MCF 10A (cell line): ENCODE measurements at regions of chr10 and their contacts with region 1.

Region 1: GRCh38 chr10:11270135-11270857 is 252.6 kb downstream of the CELF2 start:
- DNase-seq: peak; percentile 65
- H3K4me3 Mint-ChIP-seq: no peak overlapping the region
- H3K27ac Mint-ChIP-seq: no peak overlapping the region
- H3K4me1 Mint-ChIP-seq: no peaks in the 10 kb centered on the region
- H3K27me3 Mint-ChIP-seq: peaks cover 38% of the 10 kb centered on the region
- CTCF ChIP-seq: peak; percentile 81

Region 2: DNA sequence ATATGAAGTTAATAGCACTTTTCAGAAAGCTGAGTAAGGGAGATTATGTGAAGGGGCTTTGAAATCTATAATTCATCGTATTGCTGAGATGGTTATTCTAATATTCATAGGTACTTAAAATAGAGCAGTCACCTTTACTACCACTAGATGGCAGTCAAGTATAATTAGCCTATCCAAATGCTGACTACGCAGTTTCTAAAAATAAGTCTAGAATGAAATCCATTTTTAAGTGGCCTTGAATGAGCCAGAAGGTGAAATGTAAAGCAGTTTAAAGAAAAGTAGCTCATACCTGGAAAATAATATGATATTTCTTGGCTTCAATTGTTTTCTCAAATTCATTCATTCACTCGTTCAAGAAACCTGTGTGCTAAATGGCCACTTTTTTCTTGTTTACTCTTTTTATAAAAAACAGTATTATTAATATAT is 1938.7 kb before region 1 on chr10:
- CTCF ChIA-PET with region 1: no interaction called
- POLR2A ChIA-PET with region 1: no interaction called
- intact Hi-C with region 1: loop called (anchors 2 kb)
- DNase-seq: peak; percentile 50
- H3K4me3 Mint-ChIP-seq: no peak overlapping the region
- H3K27ac Mint-ChIP-seq: no peak overlapping the region
- H3K4me1 Mint-ChIP-seq: no peaks in the 10 kb centered on the region
- H3K27me3 Mint-ChIP-seq: no peaks in the 10 kb centered on the region
- CTCF ChIP-seq: peak; percentile 71

Region 3: GRCh38 chr10:9342885-9343570 is 1927.3 kb before region 1 on chr10:
- CTCF ChIA-PET with region 1: interaction called, 6 read pairs
- POLR2A ChIA-PET with region 1: no interaction called
- intact Hi-C with region 1: loop called (anchors 1 kb)
- DNase-seq: peak; percentile 59
- H3K4me3 Mint-ChIP-seq: no peak overlapping the region
- H3K27ac Mint-ChIP-seq: no peak overlapping the region
- H3K4me1 Mint-ChIP-seq: no peaks in the 10 kb centered on the region
- H3K27me3 Mint-ChIP-seq: no peaks in the 10 kb centered on the region
- CTCF ChIP-seq: peak; percentile 67

Region 4: DNA sequence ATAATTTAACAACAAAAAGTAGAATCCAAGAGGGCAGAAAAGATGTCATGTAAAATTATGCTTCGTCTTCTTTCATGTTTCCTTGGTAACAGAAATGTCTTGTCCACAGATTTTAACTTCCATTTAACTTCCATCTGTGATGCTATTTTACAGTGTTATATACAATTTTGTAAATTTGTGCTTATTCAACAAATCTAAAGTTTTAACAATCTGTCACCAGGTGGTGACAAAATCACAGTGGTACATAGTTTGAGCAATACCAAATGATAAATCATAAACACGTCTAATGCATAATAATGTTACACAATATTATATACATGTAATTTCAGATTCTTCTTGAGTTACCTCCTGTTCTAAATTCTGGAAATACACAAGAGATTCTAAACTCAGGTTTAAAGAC is 1037.1 kb before region 1 on chr10:
- CTCF ChIA-PET with region 1: no interaction called
- POLR2A ChIA-PET with region 1: no interaction called
- intact Hi-C with region 1: loop called (anchors 2 kb)
- DNase-seq: peak; percentile 6
- H3K4me3 Mint-ChIP-seq: no peak overlapping the region
- H3K27ac Mint-ChIP-seq: no peak overlapping the region
- H3K4me1 Mint-ChIP-seq: peaks cover 34% of the 10 kb centered on the region
- H3K27me3 Mint-ChIP-seq: no peaks in the 10 kb centered on the region
- CTCF ChIP-seq: peak; percentile 11

Region 5: GRCh38 chr10:10677479-10677878 is 592.8 kb before region 1 on chr10:
- CTCF ChIA-PET with region 1: no interaction called
- POLR2A ChIA-PET with region 1: no interaction called
- intact Hi-C with region 1: loop called (anchors 1 kb)
- DNase-seq: peak; percentile 80
- H3K4me3 Mint-ChIP-seq: no peak overlapping the region
- H3K27ac Mint-ChIP-seq: no peak overlapping the region
- H3K4me1 Mint-ChIP-seq: no peaks in the 10 kb centered on the region
- H3K27me3 Mint-ChIP-seq: no peaks in the 10 kb centered on the region
- CTCF ChIP-seq: peak; percentile 67

Region 6: GRCh38 chr10:11017570-11018431 is 252.5 kb before region 1 on chr10 and contains the start of gene CELF2:
- CTCF ChIA-PET with region 1: no interaction called
- POLR2A ChIA-PET with region 1: no interaction called
- intact Hi-C with region 1: no loop called
- DNase-seq: no peak
- H3K4me3 Mint-ChIP-seq: no peak within 1 kb of the TSS
- H3K27ac Mint-ChIP-seq: no peak within 1 kb of the TSS
- H3K4me1 Mint-ChIP-seq: no peaks in the 10 kb centered on the region
- H3K27me3 Mint-ChIP-seq: no peaks in the 10 kb centered on the region
- CTCF ChIP-seq: no peak
- total RNA-seq, gene CELF2: 0.07 TPM in 1 of 2 replicates, not detected in the other

Region 7: DNA sequence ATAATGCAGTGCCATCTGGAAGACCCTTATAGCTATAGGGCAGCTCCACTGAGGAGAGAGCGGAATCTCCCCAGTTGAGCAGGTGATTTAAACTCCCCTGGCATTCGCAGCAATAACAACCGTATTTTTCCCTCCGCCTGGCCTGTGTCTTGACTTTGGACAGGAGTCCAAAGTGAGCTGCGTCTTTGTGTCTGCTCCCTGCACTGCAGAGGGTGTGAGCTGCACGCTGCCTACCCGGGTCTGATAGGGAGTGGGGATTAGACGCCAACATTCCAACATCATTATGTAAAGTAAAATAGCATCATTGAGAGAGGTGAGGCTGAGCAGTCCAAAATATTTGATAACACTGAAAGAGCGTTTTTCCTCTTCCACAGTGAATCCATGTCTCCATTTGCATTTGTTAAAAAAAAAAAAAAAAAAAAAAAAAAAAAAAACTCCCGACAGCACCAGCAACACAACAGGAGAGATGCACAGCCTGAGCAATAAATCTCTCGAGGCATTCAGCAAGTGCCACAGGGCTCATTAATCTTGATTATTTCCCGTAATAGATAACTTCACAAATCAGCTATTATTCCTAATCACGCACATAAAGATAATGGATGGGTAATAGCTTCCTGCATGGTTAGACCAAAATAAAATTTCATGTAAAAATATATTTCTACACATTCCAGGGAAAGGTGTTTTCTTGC is 184.0 kb before region 1 on chr10:
- CTCF ChIA-PET with region 1: no interaction called
- POLR2A ChIA-PET with region 1: no interaction called
- intact Hi-C with region 1: no loop called
- DNase-seq: no peak
- H3K4me3 Mint-ChIP-seq: no peak overlapping the region
- H3K27ac Mint-ChIP-seq: no peak overlapping the region
- H3K4me1 Mint-ChIP-seq: no peaks in the 10 kb centered on the region
- H3K27me3 Mint-ChIP-seq: no peaks in the 10 kb centered on the region
- CTCF ChIP-seq: no peak

Region 8: DNA sequence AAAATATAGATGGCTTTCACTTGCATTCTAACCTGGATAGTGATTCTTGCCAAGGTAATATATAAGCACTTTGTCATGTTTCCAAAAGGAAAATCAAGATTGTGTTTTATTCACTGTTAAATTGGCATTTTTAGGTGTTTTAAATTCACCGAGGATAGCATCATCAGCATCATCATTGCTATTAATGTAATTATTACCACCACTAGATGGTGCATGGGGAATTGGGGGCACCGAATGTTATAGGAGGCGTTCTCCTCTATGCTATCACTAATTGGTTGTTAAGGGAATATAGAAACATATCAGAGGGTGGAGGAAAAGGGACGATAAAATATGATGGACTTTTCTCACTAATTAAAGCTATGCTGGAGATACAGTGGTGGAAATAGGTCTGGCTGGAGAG is 157.1 kb before region 1 on chr10:
- CTCF ChIA-PET with region 1: no interaction called
- POLR2A ChIA-PET with region 1: no interaction called
- intact Hi-C with region 1: loop called (anchors 5 kb)
- DNase-seq: no peak
- H3K4me3 Mint-ChIP-seq: no peak overlapping the region
- H3K27ac Mint-ChIP-seq: no peak overlapping the region
- H3K4me1 Mint-ChIP-seq: no peaks in the 10 kb centered on the region
- H3K27me3 Mint-ChIP-seq: no peaks in the 10 kb centered on the region
- CTCF ChIP-seq: no peak

Region 9: DNA sequence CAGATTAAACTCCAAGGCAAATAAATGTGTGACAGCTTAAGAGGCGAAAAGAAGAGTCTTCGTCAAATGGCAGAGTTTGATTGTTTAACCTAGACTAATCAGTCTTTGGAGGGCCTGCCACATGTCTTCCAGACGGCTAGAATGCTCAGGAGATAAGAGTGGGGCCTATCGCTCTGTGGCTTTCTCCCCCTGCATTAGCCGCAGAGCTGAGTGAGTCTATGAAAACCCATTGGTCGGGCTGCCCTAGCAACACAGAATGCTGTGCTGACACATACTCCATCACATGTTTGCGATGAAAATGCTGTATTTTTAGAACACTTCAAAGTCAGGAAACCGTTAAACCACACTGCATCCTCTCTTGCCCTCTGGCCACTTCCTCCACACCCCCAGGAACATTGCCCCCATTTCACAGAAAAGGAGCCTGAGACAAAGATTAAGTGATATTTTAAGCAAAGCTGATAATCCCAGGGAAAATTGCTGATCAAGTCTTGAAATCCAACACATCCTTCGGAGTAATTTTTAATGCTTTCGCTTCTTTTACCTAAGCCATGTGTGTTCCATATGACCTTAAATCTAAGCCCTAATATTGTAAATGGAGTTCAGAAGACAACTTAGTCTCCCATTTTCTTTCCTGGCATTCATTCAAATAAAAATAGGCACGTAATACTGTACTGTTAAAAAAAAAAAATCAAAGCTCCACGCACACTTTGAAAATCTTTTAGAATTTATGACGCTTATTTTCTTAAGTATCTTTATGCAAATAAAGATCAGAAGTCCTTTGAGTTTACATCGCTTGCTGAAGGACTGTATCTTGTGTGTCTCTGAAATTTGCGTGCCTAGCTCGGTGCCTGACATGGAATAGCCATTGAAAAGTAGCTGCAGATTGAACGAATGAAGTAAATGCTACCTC is 91.4 kb before region 1 on chr10:
- CTCF ChIA-PET with region 1: no interaction called
- POLR2A ChIA-PET with region 1: no interaction called
- intact Hi-C with region 1: no loop called
- DNase-seq: no peak
- H3K4me3 Mint-ChIP-seq: no peak overlapping the region
- H3K27ac Mint-ChIP-seq: no peak overlapping the region
- H3K4me1 Mint-ChIP-seq: no peaks in the 10 kb centered on the region
- H3K27me3 Mint-ChIP-seq: peaks cover 39% of the 10 kb centered on the region
- CTCF ChIP-seq: no peak